Dorsolateral prefrontal cortex (tissue), 120 donors: ENCODE measurements at regions of chr17 and their contacts with region 1.

Region 1: GRCh38 chr17:6421700-6422604 is 13.0 kb downstream of the AIPL1 start:
- DNase-seq: peak; percentile 73 to 89 (median 80)
- H3K4me3 ChIP-seq: no peak overlapping the region
- H3K27ac ChIP-seq: no peak overlapping the region
- H3K27me3 ChIP-seq: no peaks in the 10 kb centered on the region
- CTCF ChIP-seq: peak; percentile 69 to 97 (median 92)

Region 2: GRCh38 chr17:5584383-5585286 is 837.3 kb before region 1 on chr17 and contains the start of gene NLRP1:
- intact Hi-C with region 1: loop called (anchors 1 kb)
- DNase-seq: peak in 8 of 10 donors; percentile 35 to 64 (median 55)
- H3K4me3 ChIP-seq: peak within 1 kb of the TSS in 54 of 59 donors; percentile 0 to 59 (median 38)
- H3K27ac ChIP-seq: peak within 1 kb of the TSS in 27 of 59 donors; percentile 14 to 82 (median 53)
- H3K27me3 ChIP-seq: no peaks in the 10 kb centered on the region
- CTCF ChIP-seq: no peak
- total RNA-seq, gene NLRP1: 96.8 to 322 (median 204) TPM

Region 3: GRCh38 chr17:5706577-5707216 is 715.3 kb before region 1 on chr17:
- intact Hi-C with region 1: loop called (anchors 10 kb)
- DNase-seq: peak in 9 of 10 donors; percentile 47 to 79 (median 68)
- H3K4me3 ChIP-seq: no peak overlapping the region
- H3K27ac ChIP-seq: peak overlapping the region in 3 of 59 donors; percentile 8 to 36 (median 12)
- H3K27me3 ChIP-seq: peaks cover 0 to 5% (median 0%) of the 10 kb centered on the region in 45 donors
- CTCF ChIP-seq: peak; percentile 46 to 86 (median 75)

Region 4: DNA sequence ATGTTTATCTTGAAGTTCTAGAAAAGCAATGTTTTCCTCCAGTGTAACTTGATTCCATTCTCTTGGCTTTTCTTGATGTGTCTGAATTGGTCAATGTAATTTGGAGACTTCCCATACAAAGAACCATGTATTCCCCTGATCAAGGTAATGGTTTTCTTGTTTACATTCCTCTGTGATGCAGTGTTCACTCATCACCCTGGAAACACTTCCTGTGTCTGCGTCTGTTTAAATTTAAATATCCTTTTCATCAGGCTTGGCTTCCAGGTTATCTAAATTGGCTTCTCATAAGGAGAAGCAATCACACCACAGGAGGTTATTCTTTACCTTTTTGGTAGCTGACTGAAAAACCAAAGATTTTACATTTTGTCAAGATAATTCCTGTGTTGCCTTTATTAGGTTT is 589.1 kb before region 1 on chr17:
- intact Hi-C with region 1: loop called in 1 of 2 experiments (anchors 10 kb)
- DNase-seq: no peak
- H3K4me3 ChIP-seq: no peak overlapping the region
- H3K27ac ChIP-seq: no peak overlapping the region
- H3K27me3 ChIP-seq: peaks cover 0 to 10% (median 0%) of the 10 kb centered on the region in 45 donors
- CTCF ChIP-seq: no peak